ENCODE measurements at regions of chr6 and their contacts with region 1.

Region 1: DNA sequence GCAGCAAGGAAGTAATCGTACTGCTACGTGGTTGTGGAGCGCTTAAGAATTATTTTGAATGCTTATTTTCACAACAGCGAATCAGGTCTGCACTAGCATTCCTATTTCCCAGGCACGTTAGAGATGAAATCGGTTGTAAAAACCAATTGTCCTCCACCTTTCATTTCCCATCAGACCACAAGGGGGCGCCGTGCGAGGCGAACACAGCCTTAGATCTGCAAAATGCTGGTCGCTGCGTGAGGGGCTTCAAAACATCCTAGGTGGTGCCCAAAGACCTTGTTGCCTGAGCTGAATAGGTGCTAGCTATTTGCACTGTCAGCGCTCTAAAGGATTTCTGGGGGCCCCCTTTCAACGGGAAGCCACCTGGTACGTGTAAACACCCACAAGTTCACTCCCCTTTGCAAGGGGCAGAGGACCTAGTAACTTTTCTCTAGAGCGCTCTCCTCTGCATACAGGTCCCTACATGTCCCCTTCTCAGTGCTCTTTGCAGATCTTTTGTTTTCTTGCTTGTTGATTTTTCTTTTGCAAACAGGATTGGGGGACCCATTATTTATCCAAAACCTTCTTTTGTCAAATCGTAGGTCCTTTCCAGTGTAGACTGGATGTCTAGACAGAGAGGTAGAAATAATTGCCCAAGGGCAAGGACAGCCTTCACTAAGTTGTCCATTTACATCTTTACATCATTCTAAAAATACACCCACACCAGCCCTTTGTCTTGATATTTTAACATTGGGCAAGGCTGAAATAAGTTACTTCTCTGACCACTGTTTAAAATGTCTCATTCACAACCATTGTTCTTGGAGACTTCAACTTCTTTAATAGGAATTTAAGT is 59.8 kb downstream of the NEDD9 start:
- DNase-seq: peak; percentile 60
- H3K4me3 ChIP-seq: no peak overlapping the region
- H3K27ac ChIP-seq: no peak overlapping the region
- H3K4me1 ChIP-seq: no peaks in the 10 kb centered on the region
- H3K27me3 ChIP-seq: no peaks in the 10 kb centered on the region
- CTCF ChIP-seq: peak; percentile 62 to 93 (median 80)
- POLR2A ChIP-seq: no peak

Region 2: DNA sequence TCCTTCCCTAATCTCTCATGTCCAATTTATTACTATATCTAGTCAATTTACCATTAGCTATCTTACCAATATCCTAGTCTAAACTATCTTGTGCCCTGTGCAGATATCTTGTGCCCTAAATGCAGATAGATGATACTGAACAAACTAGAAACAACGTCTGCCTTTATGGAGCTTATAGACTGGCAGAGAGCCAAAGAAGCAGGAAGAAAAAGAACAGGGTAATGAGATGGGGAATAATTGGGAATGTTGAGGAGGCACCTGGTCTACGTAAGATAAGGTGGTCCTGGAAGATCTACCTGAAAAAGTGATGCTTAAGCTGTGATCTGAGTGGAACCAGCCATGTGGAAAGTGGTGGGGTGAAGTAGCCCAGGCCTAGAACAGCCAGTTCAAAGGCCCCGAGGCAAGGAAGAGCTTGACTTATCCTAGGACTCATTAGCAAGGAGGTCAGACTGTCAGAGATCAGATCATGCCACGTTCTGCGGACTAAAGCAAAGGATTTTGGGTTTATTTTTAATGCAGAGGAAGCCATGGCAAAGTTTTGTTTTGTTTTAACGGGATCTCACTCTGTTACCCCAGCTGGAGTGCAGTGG is 280.9 kb before region 1 on chr6:
- intact Hi-C with region 1: no loop called
- DNase-seq: no peak
- H3K4me3 ChIP-seq: no peak overlapping the region
- H3K27ac ChIP-seq: no peak overlapping the region
- H3K4me1 ChIP-seq: no peaks in the 10 kb centered on the region
- H3K27me3 ChIP-seq: no peaks in the 10 kb centered on the region
- CTCF ChIP-seq: no peak
- POLR2A ChIP-seq: no peak

Region 3: DNA sequence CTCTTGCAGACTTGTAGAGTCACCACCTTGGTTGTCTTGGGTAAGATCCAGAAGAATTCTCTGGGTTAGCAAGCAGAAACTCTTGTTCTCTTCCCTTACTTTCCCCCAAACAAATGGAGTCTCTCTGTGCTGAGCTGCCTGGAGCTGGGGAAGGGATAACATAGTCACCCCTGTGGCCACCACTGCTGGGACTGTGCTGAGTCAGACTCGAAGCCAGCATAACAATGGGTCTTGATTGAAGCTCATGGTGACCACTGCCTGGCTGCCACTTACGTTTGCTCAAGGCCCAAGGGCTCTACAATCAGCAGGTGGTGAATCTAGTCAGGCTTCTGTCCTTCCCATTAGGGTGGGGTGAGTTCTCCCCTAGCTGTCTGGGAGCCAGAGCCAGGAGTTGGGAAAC is 45.8 kb before region 1 on chr6:
- intact Hi-C with region 1: no loop called
- DNase-seq: no peak
- H3K4me3 ChIP-seq: no peak overlapping the region
- H3K27ac ChIP-seq: no peak overlapping the region
- H3K4me1 ChIP-seq: peaks cover 4% of the 10 kb centered on the region
- H3K27me3 ChIP-seq: no peaks in the 10 kb centered on the region
- CTCF ChIP-seq: no peak
- POLR2A ChIP-seq: no peak

Region 4: GRCh38 chr6:11251541-11252360 is 79.0 kb after region 1 on chr6:
- intact Hi-C with region 1: loop called (anchors 5 kb)
- DNase-seq: no peak
- H3K4me3 ChIP-seq: no peak overlapping the region
- H3K27ac ChIP-seq: peak overlapping the region; percentile 36 to 65
- H3K4me1 ChIP-seq: no peaks in the 10 kb centered on the region
- H3K27me3 ChIP-seq: no peaks in the 10 kb centered on the region
- CTCF ChIP-seq: no peak
- POLR2A ChIP-seq: no peak

Measured in prostate gland (tissue), 2 donors.